Right cardiac atrium (tissue), 5 donors: ENCODE measurements at regions of chr13 and their contacts with region 1.

Region 1: DNA sequence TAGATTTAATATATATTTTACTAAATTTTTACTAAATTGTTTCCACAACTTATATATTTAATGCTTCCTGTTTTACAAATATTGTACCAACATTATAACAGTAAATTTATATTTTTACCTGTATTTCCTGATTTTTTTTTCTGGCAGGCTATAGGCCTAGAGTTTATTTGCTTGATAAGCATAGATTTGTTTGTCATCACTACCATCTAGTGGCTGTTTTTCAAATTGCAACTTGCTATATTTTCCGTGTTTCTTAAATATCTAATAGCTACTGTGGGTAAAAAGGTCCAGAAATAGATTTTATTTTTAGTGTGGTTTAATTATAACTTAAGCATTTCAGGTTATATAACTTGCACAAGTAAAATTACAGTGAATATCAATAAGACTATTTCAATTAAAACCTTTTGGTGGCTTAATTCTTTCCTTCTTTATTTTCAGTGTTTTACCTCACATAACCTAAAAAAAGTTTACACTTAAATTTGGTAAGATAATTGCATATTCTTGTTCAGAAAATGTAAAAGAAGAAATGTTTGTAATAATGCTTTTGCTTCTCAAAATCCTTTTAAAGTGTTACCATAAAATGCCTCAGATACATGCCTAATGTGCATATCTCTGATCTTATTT is 60.6 kb downstream of the NDFIP2 start:
- DNase-seq: no peak
- ATAC-seq: no peak
- H3K4me3 ChIP-seq: no peak overlapping the region
- H3K27ac ChIP-seq: no peak overlapping the region
- H3K4me1 ChIP-seq: no peaks in the 10 kb centered on the region
- H3K27me3 ChIP-seq: no peaks in the 10 kb centered on the region

Region 2: DNA sequence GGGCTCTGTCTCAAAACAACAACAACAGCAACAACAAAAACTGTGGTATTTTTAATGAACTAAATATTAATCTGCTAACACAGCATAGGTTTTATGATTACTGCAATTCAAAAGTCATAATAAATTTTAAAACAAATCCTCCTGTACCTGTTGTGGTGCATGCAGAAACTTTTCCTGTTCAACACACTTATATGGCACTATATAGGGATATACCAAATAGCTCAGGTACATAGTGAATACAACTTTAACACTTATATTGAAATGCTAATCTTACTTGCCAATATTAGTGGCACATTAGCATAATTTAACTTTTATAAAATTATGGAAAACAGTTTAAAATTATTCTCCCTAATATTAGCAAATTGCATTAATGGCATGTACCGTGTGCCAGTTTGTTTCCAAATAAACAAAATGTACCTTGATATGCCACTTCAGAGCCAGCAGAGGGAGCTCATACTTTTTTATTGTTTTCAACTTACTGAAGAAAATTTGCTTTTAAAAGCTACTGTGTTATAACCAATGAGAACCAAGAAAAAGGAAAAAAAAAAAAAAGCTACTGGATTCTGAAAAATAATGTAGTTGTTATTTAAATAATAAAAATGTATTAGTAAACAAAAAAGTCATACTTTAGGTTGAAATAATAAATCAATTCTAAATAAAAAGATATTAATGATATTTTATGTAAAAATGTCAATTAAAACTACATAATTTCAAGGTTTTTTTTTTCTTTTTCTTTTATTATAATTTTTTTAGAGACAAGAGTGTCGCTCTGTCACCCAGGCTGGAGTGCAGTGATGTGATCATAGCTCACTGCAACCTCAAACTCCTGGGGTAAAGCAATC is 117.5 kb before region 1 on chr13:
- intact Hi-C with region 1: loop called (anchors 2 to 5 kb)
- DNase-seq: no peak
- ATAC-seq: no peak
- H3K4me3 ChIP-seq: no peak overlapping the region
- H3K27ac ChIP-seq: no peak overlapping the region
- H3K4me1 ChIP-seq: no peaks in the 10 kb centered on the region
- H3K27me3 ChIP-seq: no peaks in the 10 kb centered on the region

Region 3: GRCh38 chr13:79647538-79647937 is 106.0 kb after region 1 on chr13:
- intact Hi-C with region 1: no loop called
- DNase-seq: no peak
- ATAC-seq: no peak
- H3K4me3 ChIP-seq: no peak overlapping the region
- H3K27ac ChIP-seq: no peak overlapping the region
- H3K4me1 ChIP-seq: peaks cover 2% of the 10 kb centered on the region
- H3K27me3 ChIP-seq: no peaks in the 10 kb centered on the region

Region 4: GRCh38 chr13:79735228-79735627 is 193.7 kb after region 1 on chr13:
- intact Hi-C with region 1: no loop called
- DNase-seq: no peak
- ATAC-seq: peak in 1 of 2 donors; percentile 41
- H3K4me3 ChIP-seq: no peak overlapping the region
- H3K27ac ChIP-seq: no peak overlapping the region
- H3K4me1 ChIP-seq: no peaks in the 10 kb centered on the region
- H3K27me3 ChIP-seq: no peaks in the 10 kb centered on the region